ENCODE measurements at regions of chr9 and their contacts with region 1.

Region 1: DNA sequence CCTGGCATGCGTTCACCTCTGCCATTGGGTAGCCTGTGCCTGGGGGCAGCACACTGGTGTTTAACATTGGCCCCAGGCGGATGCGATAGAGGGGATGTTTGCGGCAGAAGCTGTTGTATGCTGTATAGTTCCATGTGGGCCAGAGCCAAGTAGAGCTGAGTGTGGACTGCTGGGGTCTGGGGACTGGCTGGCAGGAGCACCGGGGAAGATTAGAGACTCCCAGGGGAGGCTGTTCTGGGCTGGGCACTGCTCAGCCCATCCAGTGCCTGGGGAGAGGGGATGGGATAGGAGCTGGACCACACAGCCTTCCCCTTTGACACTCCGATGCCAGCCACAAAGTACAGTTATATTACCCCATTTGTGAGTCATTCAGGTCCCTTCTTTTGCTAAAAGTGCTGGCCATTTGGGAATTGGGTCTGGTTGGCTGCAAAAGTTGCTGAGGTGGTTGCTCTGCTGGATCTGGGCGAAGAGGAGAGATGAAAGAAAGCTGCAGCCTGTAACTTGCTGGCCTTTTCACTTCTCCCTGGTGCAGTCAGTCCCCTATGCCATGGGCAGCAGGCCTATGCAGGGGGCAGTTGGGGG is 73.8 kb downstream of the RGS3 start:
- DNase-seq: no peak
- H3K4me3 Mint-ChIP-seq: no peak overlapping the region
- H3K27ac Mint-ChIP-seq: no peak overlapping the region
- H3K4me1 Mint-ChIP-seq: no peaks in the 10 kb centered on the region
- H3K27me3 Mint-ChIP-seq: no peaks in the 10 kb centered on the region

Region 2: DNA sequence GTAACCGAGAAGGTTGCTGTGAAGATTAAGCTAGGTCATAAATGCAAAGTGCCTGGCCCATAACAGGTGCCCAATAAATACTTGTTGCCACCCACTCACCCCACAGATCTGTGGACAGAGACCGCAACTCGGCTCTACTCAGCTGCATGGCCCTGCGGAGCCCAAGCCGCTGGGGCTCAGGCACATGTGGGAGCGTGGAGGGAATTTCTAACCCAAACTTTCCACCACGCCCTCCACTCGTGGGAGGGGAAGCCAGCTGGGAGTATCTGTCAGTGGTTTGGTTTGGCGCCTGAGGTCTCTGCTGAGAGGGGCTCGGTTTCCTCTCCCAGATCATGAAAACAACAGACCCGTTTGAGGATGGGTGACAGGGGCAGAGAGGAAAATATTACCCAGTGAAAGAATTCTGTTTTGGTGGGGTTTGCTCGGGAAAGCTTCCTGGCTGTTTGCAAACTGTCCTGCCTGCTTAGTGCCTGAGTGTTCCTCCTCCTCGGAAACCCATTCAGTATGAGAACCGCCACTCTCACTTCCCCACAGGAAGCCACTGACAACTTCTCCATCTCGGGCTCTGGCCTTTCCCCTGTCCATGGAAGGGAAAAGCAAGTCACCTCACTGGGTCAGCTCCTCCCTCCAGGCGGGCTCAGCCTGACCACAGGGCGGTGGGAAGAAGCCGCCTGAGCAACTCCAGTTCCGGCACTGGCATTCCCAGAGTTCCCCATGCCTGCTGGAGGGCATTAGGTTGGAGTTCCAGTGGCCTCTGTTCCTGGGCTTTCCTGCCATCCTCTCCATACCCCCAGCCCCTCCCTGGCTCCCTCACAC is 13.7 kb before region 1 on chr9:
- CTCF ChIA-PET with region 1: interaction called, 19 read pairs
- POLR2A ChIA-PET with region 1: no interaction called
- DNase-seq: peak; percentile 41
- H3K4me3 Mint-ChIP-seq: peak overlapping the region; percentile 51
- H3K27ac Mint-ChIP-seq: peak overlapping the region; percentile 86
- H3K4me1 Mint-ChIP-seq: peaks cover 65% of the 10 kb centered on the region
- H3K27me3 Mint-ChIP-seq: no peaks in the 10 kb centered on the region